ENCODE measurements at regions of chr12 and their contacts with region 1.

Region 1: DNA sequence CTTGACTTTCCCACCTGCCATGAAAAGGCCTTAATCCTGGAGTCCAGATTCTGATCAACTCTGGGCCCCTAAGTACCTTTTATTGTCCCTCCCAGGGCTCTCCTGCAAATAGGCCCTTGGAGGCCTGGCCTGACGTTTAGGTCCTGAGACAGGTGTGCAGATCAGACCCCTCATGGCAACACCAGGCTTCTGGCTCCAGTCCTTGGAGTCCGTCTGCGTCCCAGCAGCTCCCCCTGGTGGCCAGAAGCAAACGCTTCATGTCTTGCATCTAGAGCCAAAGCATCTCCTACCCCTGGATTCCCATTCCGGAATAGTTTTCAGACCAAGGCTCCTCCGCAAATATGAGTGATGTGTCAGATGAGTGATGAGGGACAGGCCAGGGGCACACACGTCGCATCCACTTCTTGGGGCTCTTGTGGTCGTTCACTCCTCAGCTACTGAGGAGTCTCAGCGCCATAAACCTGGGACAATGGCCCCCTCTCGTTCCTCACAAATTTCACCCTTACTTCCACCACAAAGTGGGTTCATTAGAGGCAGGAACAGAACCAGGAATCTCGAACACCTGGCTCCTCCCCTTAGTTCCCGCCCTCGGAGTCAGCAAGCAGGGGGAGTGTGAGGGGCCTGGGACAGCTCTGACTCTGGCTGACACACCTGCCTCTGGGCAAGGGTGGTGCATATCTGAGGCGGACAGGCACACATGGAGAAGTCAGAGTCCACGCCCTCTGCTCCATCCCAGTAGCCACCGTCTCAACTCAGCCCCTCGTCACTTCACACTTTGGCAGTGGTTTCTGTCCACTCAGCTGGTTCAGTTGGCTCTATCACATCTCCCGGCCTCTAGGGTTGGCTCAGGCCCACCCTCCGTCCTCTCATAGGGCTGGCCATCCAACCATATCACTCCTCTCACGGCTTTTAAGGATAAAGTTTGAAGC is 77.9 kb upstream of the PWP1 start:
- DNase-seq: peak; percentile 81
- H3K4me3 ChIP-seq: peak overlapping the region in 1 of 2 experiments; percentile 34; a peak in 1 of 4 replicates
- H3K27ac ChIP-seq: no peak overlapping the region
- H3K4me1 ChIP-seq: peaks cover 0 to 5% of the 10 kb centered on the region in 2 experiments; a peak in 1 of 4 replicates
- H3K27me3 ChIP-seq: no peaks in the 10 kb centered on the region
- CTCF ChIP-seq: peak; percentile 93
- EP300 ChIP-seq: no peak
- RAD21 ChIP-seq: peak; percentile 95

Region 2: DNA sequence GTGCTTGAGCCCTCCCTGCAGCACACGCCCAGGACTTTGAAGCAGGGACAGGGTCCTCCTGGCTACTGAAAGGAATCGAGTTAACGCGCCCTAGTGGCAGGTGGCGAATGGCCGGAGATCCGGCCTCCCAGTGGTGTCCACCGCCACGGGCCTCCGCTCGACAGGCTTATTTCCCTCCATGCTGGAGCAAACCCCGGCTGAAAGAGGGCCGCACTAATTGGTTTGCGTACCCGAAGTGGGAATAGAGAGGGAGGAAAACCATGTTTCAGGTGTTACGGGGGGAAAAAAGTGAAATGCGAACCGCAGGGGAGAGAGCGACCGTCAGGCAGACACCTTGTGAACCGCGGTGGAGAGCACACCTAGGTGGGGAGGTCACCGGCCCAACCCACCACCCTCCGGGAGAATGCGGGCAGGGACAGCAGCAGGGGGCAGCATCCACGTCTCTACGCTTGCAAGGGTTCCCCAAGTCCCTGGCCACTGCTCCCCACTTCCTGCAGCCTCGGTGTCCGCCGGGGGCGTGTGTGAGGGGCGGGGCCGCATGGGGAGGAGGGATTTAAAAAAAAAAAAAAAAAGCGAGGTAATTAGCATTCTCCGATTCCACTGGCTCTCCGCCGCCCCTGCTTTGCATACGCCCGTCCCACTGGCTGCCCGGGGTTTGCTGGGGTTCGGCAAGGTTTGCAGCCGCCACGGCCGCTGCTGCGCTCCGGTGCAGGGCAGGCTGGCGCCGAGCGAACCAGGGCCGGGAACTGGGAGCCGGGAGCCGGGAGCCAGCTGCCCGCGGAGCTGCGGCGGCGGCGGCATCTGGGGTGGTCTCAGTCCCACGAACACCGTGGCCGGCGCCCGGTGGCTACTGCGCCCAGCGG is 289.7 kb before region 1 on chr12:
- CTCF ChIA-PET with region 1: interaction called, 29 read pairs
- POLR2A ChIA-PET with region 1: no interaction called
- DNase-seq: peak; percentile 96
- H3K4me3 ChIP-seq: peak overlapping the region; percentile 46 to 69
- H3K27ac ChIP-seq: no peak overlapping the region
- H3K4me1 ChIP-seq: peaks cover 0 to 24% of the 10 kb centered on the region in 2 experiments; a peak in 1 of 4 replicates
- H3K27me3 ChIP-seq: peaks cover 17% of the 10 kb centered on the region; the same call in 1 of the 2 replicates
- CTCF ChIP-seq: no peak; the same call in 1 of the 2 replicates
- EP300 ChIP-seq: no peak
- RAD21 ChIP-seq: peak; percentile 43

Region 3: GRCh38 chr12:107448198-107448597 is 159.5 kb before region 1 on chr12:
- CTCF ChIA-PET with region 1: interaction called, 10 read pairs
- POLR2A ChIA-PET with region 1: no interaction called
- DNase-seq: peak; percentile 40
- H3K4me3 ChIP-seq: no peak overlapping the region
- H3K27ac ChIP-seq: no peak overlapping the region
- H3K4me1 ChIP-seq: no peaks in the 10 kb centered on the region
- H3K27me3 ChIP-seq: no peaks in the 10 kb centered on the region
- CTCF ChIP-seq: peak; percentile 55
- EP300 ChIP-seq: no peak
- RAD21 ChIP-seq: peak; percentile 55

Region 4: GRCh38 chr12:107468182-107468581 is 139.5 kb before region 1 on chr12:
- CTCF ChIA-PET with region 1: interaction called, 18 read pairs
- POLR2A ChIA-PET with region 1: no interaction called
- DNase-seq: no peak
- H3K4me3 ChIP-seq: no peak overlapping the region
- H3K27ac ChIP-seq: no peak overlapping the region
- H3K4me1 ChIP-seq: peaks cover 0 to 7% of the 10 kb centered on the region in 2 experiments; a peak in 1 of 4 replicates
- H3K27me3 ChIP-seq: no peaks in the 10 kb centered on the region
- CTCF ChIP-seq: no peak
- EP300 ChIP-seq: no peak
- RAD21 ChIP-seq: no peak

Measured in SK-N-SH (cell line).